CD4-positive, alpha-beta T cell (primary cell): ENCODE measurements at regions of chr1 and their contacts with region 1.

Region 1: DNA sequence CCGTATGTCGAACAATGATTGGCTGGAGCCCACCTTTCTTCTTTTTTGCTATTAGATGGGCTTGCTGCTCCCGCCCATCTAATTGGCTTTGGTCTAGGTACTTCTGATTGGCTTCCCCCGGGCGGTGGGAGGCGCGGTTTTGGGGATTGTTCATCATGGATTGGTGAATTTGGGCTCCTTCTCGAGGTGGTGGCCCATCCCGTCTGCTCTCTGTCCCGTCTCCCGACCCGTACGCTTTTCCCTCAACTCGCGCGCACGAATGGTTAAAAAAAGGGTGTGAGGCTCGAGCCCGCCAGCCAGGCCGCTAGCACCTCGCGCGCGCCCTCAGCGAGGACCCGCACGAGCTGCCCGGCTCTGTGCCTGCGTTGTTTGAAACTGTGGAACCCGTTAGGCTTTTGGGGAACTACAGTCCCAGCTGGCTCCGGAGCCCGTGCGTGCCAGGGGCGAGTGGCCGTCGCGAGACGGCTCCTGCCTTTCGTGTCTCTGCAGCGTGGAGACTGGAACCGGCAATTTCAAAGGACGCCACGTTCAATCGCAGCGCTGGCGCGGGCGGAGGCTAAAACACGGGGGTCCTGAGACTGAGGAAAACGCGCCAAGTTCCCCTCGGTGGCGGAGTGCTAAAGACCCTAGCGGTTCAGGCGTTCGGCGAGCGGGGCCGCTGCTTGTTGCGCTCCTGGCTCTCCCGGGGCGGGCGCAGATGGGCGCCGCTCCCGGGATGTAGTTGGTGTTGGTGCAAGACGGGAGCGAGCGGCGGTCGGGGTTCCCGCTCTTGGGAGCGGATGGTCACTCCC is at the start of gene USP1:
- DNase-seq: peak; percentile 94 to 99 (median 96)
- ATAC-seq: peak; percentile 84
- H3K4me3 ChIP-seq: peak within 1 kb of the TSS; percentile 93
- H3K4me3 Mint-ChIP-seq: peak within 1 kb of the TSS; percentile 97
- H3K27ac ChIP-seq: peak within 1 kb of the TSS; percentile 97 to 99
- H3K27ac Mint-ChIP-seq: peak within 1 kb of the TSS; percentile 99
- H3K4me1 ChIP-seq: peaks cover 20% of the 10 kb centered on the region
- H3K4me1 Mint-ChIP-seq: peaks cover 48% of the 10 kb centered on the region
- H3K27me3 ChIP-seq: no peaks in the 10 kb centered on the region
- H3K27me3 Mint-ChIP-seq: no peaks in the 10 kb centered on the region
- CTCF ChIP-seq: no peak
- total RNA-seq, gene USP1: 26.2 to 28.3 TPM

Region 2: GRCh38 chr1:61724813-61725694 is 711.6 kb before region 1 on chr1 and contains the start of gene TM2D1:
- CTCF ChIA-PET with region 1: no interaction called
- POLR2A ChIA-PET with region 1: interaction called, 4 read pairs
- intact Hi-C with region 1: loop called in 1 of 2 experiments (anchors 5 kb)
- DNase-seq: peak; percentile 65 to 92 (median 78)
- ATAC-seq: peak; percentile 91
- H3K4me3 ChIP-seq: peak within 1 kb of the TSS; percentile 93
- H3K4me3 Mint-ChIP-seq: peak within 1 kb of the TSS; percentile 97
- H3K27ac ChIP-seq: peak within 1 kb of the TSS; percentile 87 to 91
- H3K27ac Mint-ChIP-seq: peak within 1 kb of the TSS; percentile 97
- H3K4me1 ChIP-seq: peaks cover 17% of the 10 kb centered on the region
- H3K4me1 Mint-ChIP-seq: peaks cover 40% of the 10 kb centered on the region
- H3K27me3 ChIP-seq: no peaks in the 10 kb centered on the region
- H3K27me3 Mint-ChIP-seq: no peaks in the 10 kb centered on the region
- CTCF ChIP-seq: no peak
- total RNA-seq, gene TM2D1: 12.0 to 13.7 TPM

Region 3: GRCh38 chr1:62271948-62272728 is 164.5 kb before region 1 on chr1:
- CTCF ChIA-PET with region 1: no interaction called
- POLR2A ChIA-PET with region 1: interaction called, 12 read pairs
- intact Hi-C with region 1: loop called in 1 of 2 experiments (anchors 5 kb)
- DNase-seq: peak; percentile 11 to 71 (median 48)
- ATAC-seq: peak; percentile 90
- H3K4me3 ChIP-seq: no peak overlapping the region
- H3K4me3 Mint-ChIP-seq: peak overlapping the region; percentile 47
- H3K27ac ChIP-seq: peak overlapping the region; percentile 31 to 69
- H3K27ac Mint-ChIP-seq: peak overlapping the region; percentile 87
- H3K4me1 ChIP-seq: peaks cover 27% of the 10 kb centered on the region
- H3K4me1 Mint-ChIP-seq: peaks cover 37% of the 10 kb centered on the region
- H3K27me3 ChIP-seq: no peaks in the 10 kb centered on the region
- H3K27me3 Mint-ChIP-seq: no peaks in the 10 kb centered on the region
- CTCF ChIP-seq: no peak

Region 4: DNA sequence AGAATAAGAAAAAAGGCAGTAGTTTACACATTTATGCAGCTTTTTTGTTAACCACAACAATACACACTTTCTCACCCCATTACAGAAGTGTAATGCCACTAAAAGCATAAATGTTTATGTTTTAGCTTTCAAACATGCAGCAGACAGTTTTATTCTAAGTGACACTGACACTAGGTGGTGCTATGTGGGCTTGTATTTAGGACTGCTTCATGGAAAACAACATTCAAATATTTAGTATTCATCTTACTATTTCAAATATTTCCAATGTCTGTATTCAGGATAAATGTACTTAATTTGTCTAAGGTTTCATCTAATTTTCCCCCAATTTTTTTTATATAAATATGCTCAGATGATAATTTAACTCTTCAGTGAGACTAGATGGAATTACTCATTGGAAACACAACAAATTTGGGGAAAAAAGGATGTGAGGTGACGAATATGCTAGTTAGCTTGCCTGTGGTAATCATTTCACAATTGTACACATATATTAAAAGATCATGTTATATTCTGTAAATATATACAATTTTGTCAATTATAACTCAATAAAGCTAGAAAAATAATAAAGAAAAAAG is 71.6 kb after region 1 on chr1:
- CTCF ChIA-PET with region 1: no interaction called
- POLR2A ChIA-PET with region 1: no interaction called
- intact Hi-C with region 1: no loop called
- DNase-seq: peak in 4 of 14 experiments; percentile 20 to 56 (median 44)
- ATAC-seq: no peak
- H3K4me3 ChIP-seq: no peak overlapping the region
- H3K4me3 Mint-ChIP-seq: no peak overlapping the region
- H3K27ac ChIP-seq: no peak overlapping the region
- H3K27ac Mint-ChIP-seq: no peak overlapping the region
- H3K4me1 ChIP-seq: no peaks in the 10 kb centered on the region
- H3K4me1 Mint-ChIP-seq: no peaks in the 10 kb centered on the region
- H3K27me3 ChIP-seq: no peaks in the 10 kb centered on the region
- H3K27me3 Mint-ChIP-seq: no peaks in the 10 kb centered on the region
- CTCF ChIP-seq: peak; percentile 72

Region 5: DNA sequence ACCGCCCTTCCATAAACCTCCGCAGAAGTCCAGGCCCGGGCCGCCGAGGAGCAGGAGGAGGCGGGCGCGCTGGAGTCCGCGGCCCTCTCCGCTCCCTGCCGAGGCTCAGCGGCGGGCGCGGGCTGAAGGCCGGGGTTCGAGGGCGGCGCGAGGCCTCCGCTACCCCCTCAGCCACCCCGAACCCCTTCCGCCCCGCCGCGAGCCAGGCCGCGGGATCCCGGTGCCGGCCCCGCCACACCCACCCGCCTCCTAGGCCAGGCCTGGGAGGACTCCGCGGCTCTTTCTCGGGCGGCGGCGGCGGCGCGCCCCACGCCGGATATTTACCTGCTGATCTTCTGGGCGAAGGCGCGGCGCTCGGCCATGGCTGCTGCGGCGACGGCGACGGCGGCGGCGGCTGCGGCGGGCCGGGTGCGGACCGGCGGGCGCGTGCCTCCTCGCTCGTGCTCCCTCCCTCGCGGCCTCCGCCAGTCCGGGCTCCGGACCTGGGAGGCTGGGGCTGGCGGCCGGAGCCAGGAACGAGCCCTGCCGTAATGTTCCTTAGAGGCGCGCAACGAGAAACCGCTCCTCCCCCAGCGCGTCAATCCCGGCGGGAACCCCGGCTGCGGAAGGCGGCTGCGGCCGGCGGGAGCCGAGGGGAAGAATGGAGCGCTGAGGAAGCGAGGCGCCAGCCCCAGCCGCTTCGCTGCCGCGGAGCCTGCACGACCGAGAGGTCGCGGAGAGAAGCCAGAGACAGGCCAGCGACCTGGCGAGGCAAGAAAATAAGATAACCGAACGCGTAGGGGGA is 251.4 kb after region 1 on chr1 and contains the start of gene DOCK7:
- CTCF ChIA-PET with region 1: no interaction called
- POLR2A ChIA-PET with region 1: interaction called, 21 read pairs
- intact Hi-C with region 1: loop called in 1 of 2 experiments (anchors 10 kb)
- DNase-seq: peak; percentile 19 to 73 (median 54)
- ATAC-seq: peak; percentile 76
- H3K4me3 ChIP-seq: peak within 1 kb of the TSS; percentile 77
- H3K4me3 Mint-ChIP-seq: peak within 1 kb of the TSS; percentile 98
- H3K27ac ChIP-seq: peak within 1 kb of the TSS in 1 of 2 donors; percentile 58
- H3K27ac Mint-ChIP-seq: peak within 1 kb of the TSS; percentile 88
- H3K4me1 ChIP-seq: peaks cover 7% of the 10 kb centered on the region
- H3K4me1 Mint-ChIP-seq: peaks cover 37% of the 10 kb centered on the region
- H3K27me3 ChIP-seq: no peaks in the 10 kb centered on the region
- H3K27me3 Mint-ChIP-seq: peaks cover 5% of the 10 kb centered on the region
- CTCF ChIP-seq: no peak
- total RNA-seq, gene DOCK7: 6.0 to 7.9 TPM

Region 6: GRCh38 chr1:62783723-62784508 is 347.3 kb after region 1 on chr1 and contains the start of gene ATG4C:
- CTCF ChIA-PET with region 1: no interaction called
- POLR2A ChIA-PET with region 1: interaction called, 29 read pairs
- intact Hi-C with region 1: loop called (anchors 1 to 2 kb)
- DNase-seq: peak; percentile 83 to 97 (median 88)
- ATAC-seq: peak; percentile 96
- H3K4me3 ChIP-seq: peak within 1 kb of the TSS; percentile 63
- H3K4me3 Mint-ChIP-seq: no peak within 1 kb of the TSS
- H3K27ac ChIP-seq: peak within 1 kb of the TSS; percentile 85 to 88
- H3K27ac Mint-ChIP-seq: no peak within 1 kb of the TSS
- H3K4me1 ChIP-seq: peaks cover 10% of the 10 kb centered on the region
- H3K4me1 Mint-ChIP-seq: peaks cover 14% of the 10 kb centered on the region
- H3K27me3 ChIP-seq: no peaks in the 10 kb centered on the region
- H3K27me3 Mint-ChIP-seq: peaks cover 4% of the 10 kb centered on the region
- CTCF ChIP-seq: no peak
- total RNA-seq, gene ATG4C: 4.2 to 4.6 TPM

Region 7: GRCh38 chr1:63522891-63523728 is 1086.4 kb after region 1 on chr1 and contains the starts of genes EFCAB7 and ITGB3BP:
- CTCF ChIA-PET with region 1: no interaction called
- POLR2A ChIA-PET with region 1: no interaction called
- intact Hi-C with region 1: loop called in 1 of 2 experiments (anchors 10 kb)
- DNase-seq: peak; percentile 66 to 91 (median 75)
- ATAC-seq: peak; percentile 85
- H3K4me3 ChIP-seq: peak within 1 kb of the TSS; percentile 79
- H3K4me3 Mint-ChIP-seq: peak within 1 kb of the TSS; percentile 91
- H3K27ac ChIP-seq: peak within 1 kb of the TSS; percentile 68 to 86
- H3K27ac Mint-ChIP-seq: peak within 1 kb of the TSS; percentile 95
- H3K4me1 ChIP-seq: peaks cover 13% of the 10 kb centered on the region
- H3K4me1 Mint-ChIP-seq: peaks cover 47% of the 10 kb centered on the region
- H3K27me3 ChIP-seq: no peaks in the 10 kb centered on the region
- H3K27me3 Mint-ChIP-seq: no peaks in the 10 kb centered on the region
- CTCF ChIP-seq: no peak
- total RNA-seq, gene EFCAB7: 5.7 to 8.9 TPM
- total RNA-seq, gene ITGB3BP: 8.3 to 9.3 TPM